H1 (cell line): ENCODE measurements at regions of chr13 and their contacts with region 1.

Region 1: GRCh38 chr13:52001120-52001731 is 10.0 kb downstream of the ATP7B start:
- DNase-seq: no peak
- H3K4me3 ChIP-seq: no peak overlapping the region
- H3K27ac ChIP-seq: no peak overlapping the region
- H3K4me1 ChIP-seq: peaks cover 0 to 19% (median 14%) of the 10 kb centered on the region in 4 experiments; a peak in 4 of 7 replicates
- H3K27me3 ChIP-seq: no peaks in the 10 kb centered on the region; a peak in 1 of 7 replicates
- CTCF ChIP-seq: peak in 2 of 3 experiments; percentile 36 to 60; a peak in 2 of 4 replicates
- EP300 ChIP-seq: no peak
- POLR2A ChIP-seq: no peak
- RAD21 ChIP-seq: peak; percentile 63 to 64

Region 2: GRCh38 chr13:51911860-51912510 is 89.2 kb before region 1 on chr13:
- CTCF ChIA-PET with region 1: interaction called, 15 read pairs
- POLR2A ChIA-PET with region 1: no interaction called
- DNase-seq: no peak
- H3K4me3 ChIP-seq: no peak overlapping the region
- H3K27ac ChIP-seq: no peak overlapping the region
- H3K4me1 ChIP-seq: no peaks in the 10 kb centered on the region; a peak in 2 of 7 replicates
- H3K27me3 ChIP-seq: no peaks in the 10 kb centered on the region
- CTCF ChIP-seq: no peak
- EP300 ChIP-seq: no peak
- POLR2A ChIP-seq: no peak
- RAD21 ChIP-seq: no peak

Region 3: DNA sequence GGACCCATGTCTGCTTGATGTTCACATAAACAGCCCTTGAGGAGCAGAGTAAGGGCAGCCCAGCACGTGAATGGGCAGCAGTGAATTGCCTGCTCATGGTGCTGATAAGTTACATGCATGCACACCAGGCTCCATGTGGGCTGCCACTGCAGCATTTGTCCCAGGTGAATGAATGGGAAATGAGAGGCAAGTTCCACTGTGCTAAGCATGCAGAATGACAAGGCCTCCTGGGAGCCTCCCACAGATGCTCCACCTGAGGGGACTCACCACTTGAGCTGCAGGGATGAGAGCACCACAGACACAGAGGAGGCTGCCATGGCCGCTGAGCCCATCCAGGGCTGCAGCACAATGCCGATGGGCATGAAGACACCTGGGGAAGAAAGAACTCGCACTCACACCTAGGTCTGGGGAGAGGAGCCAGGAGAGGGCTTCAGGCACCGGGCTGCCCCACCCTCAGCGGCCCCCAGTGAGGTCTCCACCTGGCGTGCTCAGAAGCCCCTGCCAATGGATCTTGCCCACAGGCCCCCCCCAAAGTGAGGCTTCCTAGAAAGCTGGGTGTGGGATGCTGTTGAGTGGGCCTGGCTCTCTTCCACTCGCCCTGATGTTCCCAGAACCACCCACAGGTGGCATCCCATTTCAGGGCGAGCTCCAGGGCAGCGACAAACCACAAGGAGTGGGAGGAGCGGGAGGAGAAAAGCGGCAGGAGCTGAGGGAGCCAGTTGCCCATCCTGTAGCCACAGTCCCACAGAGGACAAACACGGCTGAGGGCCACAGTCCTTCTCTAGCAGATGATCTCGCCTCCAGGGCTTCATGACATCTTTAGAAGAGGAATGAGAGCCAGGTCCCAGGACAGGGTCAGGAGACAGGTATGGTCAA is 65.7 kb before region 1 on chr13:
- CTCF ChIA-PET with region 1: interaction called, 16 read pairs
- POLR2A ChIA-PET with region 1: interaction called, 3 read pairs
- DNase-seq: peak in 1 of 2 experiments; percentile 74
- H3K4me3 ChIP-seq: no peak overlapping the region
- H3K27ac ChIP-seq: no peak overlapping the region
- H3K4me1 ChIP-seq: no peaks in the 10 kb centered on the region
- H3K27me3 ChIP-seq: no peaks in the 10 kb centered on the region
- CTCF ChIP-seq: peak; percentile 69 to 74 (median 73)
- EP300 ChIP-seq: no peak
- POLR2A ChIP-seq: no peak
- RAD21 ChIP-seq: peak; percentile 66 to 76

Region 4: GRCh38 chr13:51978796-51979556 is 22.2 kb before region 1 on chr13:
- CTCF ChIA-PET with region 1: interaction called, 28 read pairs
- POLR2A ChIA-PET with region 1: no interaction called
- DNase-seq: no peak
- H3K4me3 ChIP-seq: no peak overlapping the region
- H3K27ac ChIP-seq: no peak overlapping the region
- H3K4me1 ChIP-seq: peaks cover 0 to 4% (median 2%) of the 10 kb centered on the region in 4 experiments; a peak in 4 of 7 replicates
- H3K27me3 ChIP-seq: no peaks in the 10 kb centered on the region
- CTCF ChIP-seq: no peak
- EP300 ChIP-seq: no peak
- POLR2A ChIP-seq: no peak
- RAD21 ChIP-seq: no peak

Region 5: GRCh38 chr13:52011632-52012511 is 10.6 kb after region 1 on chr13 and contains the start of gene ALG11:
- CTCF ChIA-PET with region 1: interaction called, 12 read pairs
- POLR2A ChIA-PET with region 1: interaction called, 8 read pairs
- DNase-seq: peak; percentile 97 to 100
- H3K4me3 ChIP-seq: peak within 1 kb of the TSS; percentile 89 to 98 (median 94)
- H3K27ac ChIP-seq: peak within 1 kb of the TSS; percentile 79; the same call in 1 of the 2 replicates
- H3K4me1 ChIP-seq: no peaks in the 10 kb centered on the region; a peak in 1 of 7 replicates
- H3K27me3 ChIP-seq: peaks cover 2 to 21% (median 13%) of the 10 kb centered on the region in 4 experiments
- CTCF ChIP-seq: no peak; a peak in 1 of 4 replicates
- EP300 ChIP-seq: no peak
- POLR2A ChIP-seq: peak; percentile 80 to 91
- RAD21 ChIP-seq: no peak
- total RNA-seq, gene ALG11: 36.2 and 39.9 TPM in 2 replicates